ENCODE measurements at regions of chr19 and their contacts with region 1.

Region 1: DNA sequence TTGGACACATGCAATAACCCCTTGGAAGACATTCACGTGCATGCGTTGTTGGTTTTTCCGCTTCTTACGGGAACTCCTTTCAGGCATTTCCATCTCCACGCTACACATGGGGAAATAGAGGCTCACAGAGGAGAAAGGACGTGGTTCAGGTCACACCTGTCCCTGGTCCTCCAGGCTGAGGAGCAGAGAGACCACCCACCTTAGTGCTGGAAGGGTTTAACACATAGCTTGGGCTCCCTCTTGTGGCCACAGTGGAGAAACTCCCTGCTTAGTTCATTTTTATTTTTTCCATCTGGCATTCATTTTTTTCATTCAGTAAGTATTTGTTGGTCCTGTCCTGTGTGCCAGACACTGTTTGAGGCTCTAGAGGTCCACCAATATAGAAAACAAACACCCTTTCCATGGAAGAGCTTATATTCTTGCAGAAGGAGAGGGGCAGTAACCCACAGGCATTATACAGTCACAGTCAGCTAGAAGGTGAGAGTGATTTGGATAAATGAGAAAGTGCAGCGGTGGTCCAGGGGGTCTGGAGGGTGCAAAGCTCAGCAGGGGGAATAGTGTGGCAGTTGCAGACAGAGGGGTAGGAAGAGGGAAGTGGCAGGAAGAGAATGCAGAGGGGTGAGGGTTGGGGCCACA is 24.2 kb upstream of the TTYH1 start:
- DNase-seq: no peak
- ATAC-seq: no peak
- H3K4me3 ChIP-seq: no peak overlapping the region
- H3K27ac ChIP-seq: no peak overlapping the region
- H3K4me1 ChIP-seq: no peaks in the 10 kb centered on the region
- H3K27me3 ChIP-seq: peaks cover 0 to 22% (median 5%) of the 10 kb centered on the region in 3 donors
- CTCF ChIP-seq: peak; percentile 61

Region 2: DNA sequence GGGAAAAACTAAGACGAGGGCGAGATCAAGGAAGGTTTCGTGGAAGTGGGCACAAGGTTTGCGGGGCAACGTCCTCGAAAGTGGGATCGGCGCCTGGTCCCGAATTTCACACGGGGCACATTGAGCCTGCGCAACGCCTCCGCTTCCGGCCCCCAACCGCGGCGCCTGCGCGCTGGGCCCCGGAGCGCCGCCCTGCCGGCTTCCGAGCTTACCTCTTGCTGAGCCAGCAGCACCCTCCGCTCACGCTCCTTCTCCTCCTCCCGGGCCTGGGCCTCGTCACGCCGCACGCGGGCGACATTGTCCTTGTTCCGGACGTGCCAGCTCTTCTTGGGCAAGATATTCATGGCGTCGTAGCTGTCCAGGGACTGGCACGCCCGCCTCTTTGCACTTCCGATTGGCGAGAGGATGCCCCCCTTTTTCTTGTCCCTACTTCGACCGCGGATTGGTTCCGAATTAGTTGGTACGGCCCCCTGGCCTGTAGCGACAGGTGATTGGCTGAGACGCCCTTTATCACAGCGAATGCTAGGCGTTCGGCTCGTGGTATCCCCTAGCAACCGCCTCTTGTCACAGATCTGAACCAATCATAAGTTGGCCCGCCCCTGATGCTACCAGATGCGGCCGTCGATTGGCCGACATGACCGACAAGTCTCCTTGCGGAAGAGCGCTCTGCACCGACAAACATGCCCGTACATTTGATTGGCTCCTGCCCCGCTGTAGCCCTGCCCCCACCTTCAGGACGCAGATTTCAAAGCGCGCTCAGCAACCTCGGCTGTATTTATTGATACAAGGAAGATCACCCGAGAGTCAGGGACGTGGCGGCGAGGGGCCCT is 231.5 kb before region 1 on chr19 and contains the start of gene LENG1:
- intact Hi-C with region 1: loop called in 1 of 2 experiments (anchors 10 kb)
- DNase-seq: peak; percentile 99
- ATAC-seq: peak; percentile 93 to 96 (median 94)
- H3K4me3 ChIP-seq: peak within 1 kb of the TSS; percentile 89
- H3K27ac ChIP-seq: peak within 1 kb of the TSS; percentile 98
- H3K4me1 ChIP-seq: peaks cover 27% of the 10 kb centered on the region
- H3K27me3 ChIP-seq: peaks cover 0 to 3% (median 0%) of the 10 kb centered on the region in 3 donors
- CTCF ChIP-seq: peak; percentile 29
- total RNA-seq, gene LENG1: 5.8 to 10.2 (median 7.0) TPM

Region 3: DNA sequence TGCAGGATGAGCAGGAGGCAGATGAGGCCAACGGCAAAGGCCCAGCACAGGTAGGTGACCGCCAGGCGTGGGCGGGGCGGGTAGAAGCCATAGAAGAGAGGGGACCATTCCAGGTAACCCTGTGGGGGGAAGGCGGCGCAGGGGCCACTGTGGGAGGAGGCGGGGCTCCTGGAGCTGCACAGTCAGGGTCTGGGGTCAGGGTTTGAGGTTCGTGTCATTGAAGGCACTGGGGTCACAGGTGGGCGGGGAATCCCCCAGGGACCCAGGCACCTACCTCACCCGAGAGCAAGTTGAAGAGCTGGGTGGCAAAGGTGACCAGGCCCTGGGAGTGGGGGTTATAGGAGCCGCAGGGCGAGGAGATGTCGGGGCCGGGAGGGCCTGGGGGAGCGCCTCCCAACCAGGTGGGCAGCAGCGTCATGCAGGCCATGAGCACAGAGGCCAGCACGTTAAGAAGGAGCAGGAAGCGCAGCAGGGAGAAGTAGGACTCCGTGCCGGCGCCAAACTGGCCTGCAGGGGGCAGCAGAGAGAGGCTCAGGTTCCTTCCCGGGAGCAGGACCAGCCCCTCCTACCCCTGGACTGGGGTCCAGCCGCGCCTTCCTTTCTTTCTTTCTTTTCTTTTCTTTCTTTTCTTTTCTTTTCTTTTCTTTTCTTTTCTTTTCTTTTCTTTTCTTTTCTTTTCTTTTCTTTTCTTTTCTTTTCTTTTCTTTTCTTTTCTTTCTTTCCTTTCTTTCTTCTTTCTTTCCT is 222.7 kb before region 1 on chr19:
- intact Hi-C with region 1: loop called (anchors 2 to 10 kb)
- DNase-seq: peak; percentile 91 to 96
- ATAC-seq: peak; percentile 88 to 97 (median 92)
- H3K4me3 ChIP-seq: no peak overlapping the region
- H3K27ac ChIP-seq: no peak overlapping the region
- H3K4me1 ChIP-seq: no peaks in the 10 kb centered on the region
- H3K27me3 ChIP-seq: peaks cover 0 to 26% (median 5%) of the 10 kb centered on the region in 3 donors
- CTCF ChIP-seq: peak; percentile 86

Region 4: DNA sequence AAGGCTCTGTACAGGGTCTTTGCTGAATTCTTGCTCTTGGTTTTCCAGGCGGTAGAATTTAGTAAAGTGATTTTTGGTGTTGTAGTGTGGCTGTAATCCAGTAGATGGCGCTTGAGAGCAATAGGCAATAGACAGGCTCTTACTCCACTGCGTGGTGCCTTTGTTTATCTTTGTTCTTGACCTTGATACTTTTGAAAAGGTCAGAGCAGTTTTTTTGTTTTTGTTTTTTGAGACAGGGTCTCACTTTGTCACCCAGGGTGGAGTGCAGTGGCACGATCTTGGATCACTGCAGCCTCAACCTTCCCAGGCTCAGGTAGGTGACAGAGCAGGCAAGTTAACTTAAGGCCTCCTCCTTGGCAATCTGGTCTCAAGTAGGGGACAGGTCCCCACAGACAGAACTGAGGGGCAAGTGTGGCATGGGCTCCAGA is 65.9 kb before region 1 on chr19:
- intact Hi-C with region 1: loop called in 1 of 2 experiments (anchors 5 kb)
- DNase-seq: no peak
- ATAC-seq: no peak
- H3K4me3 ChIP-seq: no peak overlapping the region
- H3K27ac ChIP-seq: no peak overlapping the region
- H3K4me1 ChIP-seq: no peaks in the 10 kb centered on the region
- H3K27me3 ChIP-seq: peaks cover 0 to 2% (median 0%) of the 10 kb centered on the region in 3 donors
- CTCF ChIP-seq: peak; percentile 58

Measured in psoas muscle (tissue), 8 donors.